Cardiac septum (tissue), 1 donor: ENCODE measurements at regions of chr7 and their contacts with region 1.

Region 1: DNA sequence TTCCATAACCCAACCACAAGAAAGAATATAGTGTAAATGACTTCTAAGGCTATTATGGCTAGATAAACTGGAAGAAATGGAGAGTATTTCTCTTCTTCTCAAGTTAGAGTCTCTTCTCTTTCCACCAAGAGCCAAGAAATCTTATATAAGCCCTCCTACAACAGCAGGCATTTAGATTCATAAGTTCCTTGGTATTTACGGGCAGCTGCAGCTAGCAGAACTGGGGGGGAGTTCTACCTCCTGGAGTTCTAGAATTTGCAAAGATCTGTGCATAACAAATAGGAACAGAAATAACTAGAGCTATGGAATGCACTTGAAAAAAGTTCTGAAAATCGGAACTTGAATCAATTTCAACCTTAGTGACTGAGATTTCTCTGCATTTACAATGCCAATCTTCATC is 715.2 kb upstream of the GRM3 start:
- DNase-seq: no peak

Region 2: GRCh38 chr7:85587785-85588184 is 340.7 kb before region 1 on chr7:
- intact Hi-C with region 1: no loop called
- DNase-seq: no peak

Region 3: GRCh38 chr7:85802211-85802610 is 126.3 kb before region 1 on chr7:
- intact Hi-C with region 1: no loop called
- DNase-seq: no peak

Region 4: DNA sequence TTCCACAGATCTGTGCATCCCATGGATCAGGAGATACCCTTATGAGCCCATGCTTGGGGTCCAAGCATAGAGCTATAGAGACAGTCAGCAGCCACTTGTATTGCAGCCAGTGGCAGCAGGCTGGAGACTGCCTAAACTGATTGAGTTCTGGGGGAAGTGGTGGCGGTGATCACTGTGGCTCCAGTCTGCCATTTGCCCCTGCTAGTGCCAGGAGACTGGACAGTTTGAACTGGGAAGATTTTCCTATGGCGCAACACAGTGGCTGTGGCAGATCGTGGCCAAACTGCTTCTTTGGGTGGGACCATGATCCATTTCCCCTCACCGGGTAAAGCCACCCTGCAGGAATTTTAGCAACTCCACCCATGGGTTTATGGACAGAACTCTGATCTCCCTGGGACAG is 62.0 kb before region 1 on chr7:
- intact Hi-C with region 1: loop called (anchors 10 kb)
- DNase-seq: no peak

Region 5: GRCh38 chr7:86190347-86190746 is 261.8 kb after region 1 on chr7:
- intact Hi-C with region 1: no loop called
- DNase-seq: no peak

Region 6: GRCh38 chr7:86667732-86668131 is 739.2 kb after region 1 on chr7:
- intact Hi-C with region 1: no loop called
- DNase-seq: no peak